Heart right ventricle (tissue), 16 donors: ENCODE measurements at regions of chr15 and their contacts with region 1.

Region 1: GRCh38 chr15:66901336-66902100 is 163.9 kb upstream of the SMAD3 start:
- DNase-seq: no peak
- ATAC-seq: peak in 7 of 8 donors; percentile 52 to 79 (median 62)
- H3K4me3 ChIP-seq: no peak overlapping the region
- H3K27ac ChIP-seq: peak overlapping the region; percentile 20 to 84 (median 74)
- H3K4me1 ChIP-seq: peaks cover 3 to 36% (median 18%) of the 10 kb centered on the region in 9 donors
- H3K27me3 ChIP-seq: no peaks in the 10 kb centered on the region
- CTCF ChIP-seq: no peak

Region 2: DNA sequence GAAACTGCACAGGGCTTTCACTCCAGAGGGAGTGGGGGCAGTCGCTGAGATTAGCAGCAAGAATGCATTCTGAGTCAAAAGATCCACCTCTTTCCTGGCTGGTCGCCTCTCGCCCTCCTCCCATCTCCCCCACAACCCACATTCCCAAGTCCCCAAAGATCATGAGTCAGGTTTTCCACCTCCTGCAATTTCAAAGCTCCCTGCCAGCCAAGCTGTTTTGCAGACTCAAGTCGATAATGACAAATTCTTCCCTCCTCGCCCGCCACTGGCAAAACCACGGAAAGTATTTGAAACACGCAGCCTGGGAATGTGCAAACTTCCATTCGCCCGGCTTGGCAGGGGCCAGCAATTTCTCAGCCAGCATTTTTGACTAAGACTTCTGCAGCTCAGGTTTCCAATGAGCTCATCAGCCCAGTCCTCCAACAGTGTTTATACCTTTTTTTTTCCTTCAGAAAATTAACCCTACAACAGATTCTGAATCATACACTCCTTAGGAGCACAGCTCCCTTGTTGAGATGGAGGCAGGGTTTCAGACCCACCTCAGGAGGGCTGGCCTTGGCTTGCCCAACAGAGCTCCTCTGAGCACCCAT is 18.1 kb before region 1 on chr15:
- intact Hi-C with region 1: loop called in 1 of 10 experiments (anchors 2 kb)
- DNase-seq: peak; percentile 86 to 94
- ATAC-seq: peak; percentile 77 to 89 (median 85)
- H3K4me3 ChIP-seq: no peak overlapping the region
- H3K27ac ChIP-seq: peak overlapping the region; percentile 36 to 90 (median 74)
- H3K4me1 ChIP-seq: peaks cover 16 to 68% (median 59%) of the 10 kb centered on the region in 9 donors
- H3K27me3 ChIP-seq: no peaks in the 10 kb centered on the region
- CTCF ChIP-seq: no peak